Panc1 (cell line): ENCODE measurements at regions of chr20 and their contacts with region 1.

Region 1: GRCh38 chr20:49037962-49038387 is 8.1 kb upstream of the CSE1L start:
- DNase-seq: no peak
- ATAC-seq: no peak
- H3K4me3 ChIP-seq: no peak overlapping the region
- H3K27ac ChIP-seq: no peak overlapping the region
- H3K4me1 ChIP-seq: no peaks in the 10 kb centered on the region
- H3K27me3 ChIP-seq: no peaks in the 10 kb centered on the region
- CTCF ChIP-seq: no peak

Region 2: GRCh38 chr20:49078296-49078695 is 40.3 kb after region 1 on chr20:
- CTCF ChIA-PET with region 1: no interaction called
- POLR2A ChIA-PET with region 1: interaction called, 12 read pairs
- in situ Hi-C with region 1: no loop called
- intact Hi-C with region 1: no loop called
- DNase-seq: no peak
- ATAC-seq: no peak
- H3K4me3 ChIP-seq: no peak overlapping the region
- H3K27ac ChIP-seq: no peak overlapping the region
- H3K4me1 ChIP-seq: no peaks in the 10 kb centered on the region
- H3K27me3 ChIP-seq: no peaks in the 10 kb centered on the region
- CTCF ChIP-seq: no peak